A549 (cell line): ENCODE measurements at regions of chr9 and their contacts with region 1.

Region 1: DNA sequence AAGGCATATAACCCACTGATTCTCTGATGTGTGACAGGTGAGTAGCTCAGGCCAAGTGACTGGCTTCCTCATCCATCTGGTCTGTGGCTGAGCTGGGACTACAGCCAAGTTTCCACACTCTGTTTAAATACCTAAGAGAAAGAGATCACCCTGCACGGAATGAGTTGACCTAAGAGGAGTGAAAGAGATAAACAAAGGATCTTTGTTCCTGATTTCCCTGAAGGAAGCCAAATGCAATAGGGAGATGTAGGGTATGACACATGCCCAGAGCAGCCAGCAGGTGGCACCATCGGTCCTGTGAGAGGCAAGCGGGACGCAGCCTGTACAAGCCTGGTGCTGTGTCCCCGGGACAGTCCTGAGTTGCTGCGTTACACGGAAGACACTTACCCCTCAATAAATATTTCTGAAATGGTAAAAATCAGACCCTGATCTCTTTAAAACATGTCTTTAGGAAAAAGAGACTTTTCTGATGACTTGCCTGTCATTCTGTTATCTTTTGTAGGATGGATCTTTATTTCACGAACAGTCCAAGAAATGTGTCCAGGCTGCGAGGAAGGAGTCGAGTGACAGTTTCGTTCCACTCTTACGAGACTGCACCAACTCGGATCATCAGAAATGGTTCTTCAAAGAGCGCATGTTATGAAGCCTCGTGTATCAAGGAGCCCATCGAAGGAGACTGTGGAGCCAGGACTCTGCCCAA is 41.1 kb downstream of the GALNT12 start:
- DNase-seq: peak; percentile 83 to 87
- ATAC-seq: peak; percentile 99 to 100
- H3K4me3 ChIP-seq: no peak overlapping the region
- H3K27ac ChIP-seq: no peak overlapping the region; a peak in 1 of 6 replicates
- H3K4me1 ChIP-seq: no peaks in the 10 kb centered on the region
- CTCF ChIP-seq: peak; percentile 93
- EP300 ChIP-seq: no peak
- POLR2A ChIP-seq: no peak
- RAD21 ChIP-seq: peak; percentile 87 to 95

Region 2: DNA sequence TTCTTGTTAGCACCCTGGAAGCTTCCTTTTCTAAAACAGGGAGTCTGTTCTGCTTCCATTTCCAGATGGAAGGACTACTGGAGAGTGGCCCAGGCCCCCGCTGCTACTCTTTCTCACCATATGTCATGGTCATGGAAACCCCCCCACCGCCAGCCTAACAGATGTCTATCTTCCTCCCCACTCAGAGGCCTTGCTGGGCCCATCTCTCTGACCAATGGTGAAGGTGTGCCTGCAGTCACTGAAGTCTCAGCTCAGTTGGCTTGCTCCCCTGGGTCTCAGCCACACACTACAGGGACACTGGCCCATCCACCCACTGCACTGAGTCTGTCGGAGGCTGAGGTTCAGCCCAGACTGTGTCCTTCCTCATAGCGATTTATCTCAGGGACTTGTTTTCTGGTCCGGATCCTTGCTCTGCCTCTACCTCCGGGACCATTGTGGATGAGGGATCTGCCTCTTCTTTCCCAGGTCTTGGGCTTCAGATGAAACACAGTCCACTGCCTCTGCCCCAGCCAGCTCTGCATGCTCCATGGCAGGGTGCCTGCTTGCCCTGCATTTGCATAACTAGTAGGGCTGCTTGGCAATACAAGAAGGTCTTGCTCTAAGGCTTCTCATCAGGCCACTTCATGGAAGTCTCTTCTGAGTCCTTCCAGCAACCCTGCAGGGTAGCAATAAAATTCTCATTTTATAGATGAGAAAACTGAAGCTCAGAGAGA is 10.3 kb before region 1 on chr9:
- CTCF ChIA-PET with region 1: interaction called, 47 read pairs
- POLR2A ChIA-PET with region 1: no interaction called
- DNase-seq: no peak
- ATAC-seq: no peak
- H3K4me3 ChIP-seq: no peak overlapping the region
- H3K27ac ChIP-seq: no peak overlapping the region
- H3K4me1 ChIP-seq: no peaks in the 10 kb centered on the region
- CTCF ChIP-seq: no peak
- EP300 ChIP-seq: no peak
- POLR2A ChIP-seq: no peak
- RAD21 ChIP-seq: no peak

Region 3: DNA sequence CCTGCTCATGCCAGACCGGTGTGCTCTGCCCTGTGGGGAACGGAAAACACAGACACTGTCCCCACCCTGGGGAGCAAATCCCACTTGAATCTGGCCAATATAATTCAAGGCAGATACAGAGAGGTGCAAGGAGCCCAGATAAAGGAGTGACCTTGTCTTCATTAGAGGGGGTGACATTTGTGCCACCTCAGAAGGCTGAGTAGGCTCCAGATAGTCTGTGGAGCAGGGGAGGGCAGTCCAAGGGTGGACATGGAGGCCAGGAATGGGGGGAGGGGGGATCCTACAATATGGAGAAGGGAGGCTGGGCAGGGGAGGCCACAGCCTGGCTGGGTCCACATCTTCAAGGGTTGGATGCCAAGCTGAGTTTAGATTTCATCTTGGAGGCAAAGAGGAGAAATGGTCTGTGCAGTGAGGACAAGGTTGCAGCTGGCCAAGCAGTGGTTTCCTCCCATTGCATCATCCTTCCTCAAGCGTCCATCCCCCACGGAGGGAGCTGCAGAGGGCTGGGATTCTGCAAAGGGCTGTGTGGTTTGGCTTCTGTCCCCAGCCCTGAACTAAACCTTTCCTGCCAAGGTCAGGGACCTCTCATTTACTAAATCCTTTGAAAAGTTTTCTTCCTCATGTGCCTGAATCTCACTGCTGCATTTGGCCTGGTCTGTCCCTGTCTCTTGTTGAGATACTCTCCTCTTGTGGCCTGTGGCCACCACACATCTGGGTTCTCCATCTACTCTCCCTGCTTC is 19.0 kb after region 1 on chr9:
- CTCF ChIA-PET with region 1: interaction called, 16 read pairs
- POLR2A ChIA-PET with region 1: no interaction called
- DNase-seq: peak in 1 of 2 experiments; percentile 15
- ATAC-seq: peak in 1 of 2 experiments; percentile 51; a peak in 2 of 6 replicates
- H3K4me3 ChIP-seq: no peak overlapping the region
- H3K27ac ChIP-seq: peak overlapping the region; percentile 72 to 73
- H3K4me1 ChIP-seq: peaks cover 10% of the 10 kb centered on the region; the same call in 2 of the 3 replicates
- CTCF ChIP-seq: no peak
- EP300 ChIP-seq: no peak
- POLR2A ChIP-seq: no peak
- RAD21 ChIP-seq: no peak

Region 4: GRCh38 chr9:98998441-98999151 is 150.0 kb after region 1 on chr9:
- CTCF ChIA-PET with region 1: interaction called, 118 read pairs
- POLR2A ChIA-PET with region 1: no interaction called
- DNase-seq: peak; percentile 60 to 81
- ATAC-seq: peak; percentile 91 to 97
- H3K4me3 ChIP-seq: no peak overlapping the region
- H3K27ac ChIP-seq: peak overlapping the region; percentile 33 to 37; a peak in 4 of 6 replicates
- H3K4me1 ChIP-seq: peaks cover 21% of the 10 kb centered on the region
- CTCF ChIP-seq: peak; percentile 71
- EP300 ChIP-seq: no peak
- POLR2A ChIP-seq: no peak
- RAD21 ChIP-seq: peak; percentile 73

Region 5: DNA sequence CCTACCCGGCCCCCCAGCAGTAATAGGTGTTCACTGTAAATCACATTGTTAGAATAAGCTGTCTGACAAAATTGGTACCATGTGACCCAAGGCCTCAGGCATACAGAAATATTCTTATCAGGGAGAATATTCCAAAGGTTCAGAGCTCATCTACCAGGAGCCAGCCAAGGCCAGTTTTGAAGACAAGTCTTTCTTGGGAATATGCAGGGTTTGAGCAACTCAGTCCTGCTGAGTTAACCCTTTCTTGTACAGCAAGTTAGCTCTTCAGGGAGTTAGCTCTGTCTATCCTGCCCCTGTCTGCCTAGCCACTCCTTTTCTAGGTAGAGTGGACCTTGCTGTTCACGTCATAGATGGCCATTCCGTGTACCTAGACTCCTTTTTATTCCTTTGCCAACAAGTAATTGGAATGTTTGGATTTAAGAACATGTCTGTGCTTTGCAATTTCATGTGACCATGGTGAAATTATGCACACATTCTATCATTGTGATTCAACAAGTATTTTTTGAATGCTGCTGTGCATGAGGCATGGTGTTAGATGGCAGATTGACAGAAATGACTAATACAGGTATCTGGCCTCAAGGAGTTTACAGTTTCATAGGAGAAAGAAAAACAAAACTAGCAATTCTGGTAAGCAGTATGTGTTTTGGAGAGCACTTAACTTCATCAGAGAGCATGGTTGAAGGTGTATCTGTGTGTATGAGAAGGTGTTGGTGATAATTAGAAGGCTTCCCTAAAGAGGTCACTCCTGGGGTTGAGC is 279.0 kb after region 1 on chr9:
- CTCF ChIA-PET with region 1: interaction called, 24 read pairs
- POLR2A ChIA-PET with region 1: no interaction called
- DNase-seq: no peak
- ATAC-seq: peak in 1 of 2 experiments; percentile 34; a peak in 1 of 6 replicates
- H3K4me3 ChIP-seq: no peak overlapping the region
- H3K27ac ChIP-seq: no peak overlapping the region
- H3K4me1 ChIP-seq: peaks cover 3% of the 10 kb centered on the region; the same call in 2 of the 3 replicates
- CTCF ChIP-seq: no peak
- EP300 ChIP-seq: no peak
- POLR2A ChIP-seq: no peak
- RAD21 ChIP-seq: no peak